GM12878 (cell line): ENCODE measurements at regions of chr11 and their contacts with region 1.

Region 1: DNA sequence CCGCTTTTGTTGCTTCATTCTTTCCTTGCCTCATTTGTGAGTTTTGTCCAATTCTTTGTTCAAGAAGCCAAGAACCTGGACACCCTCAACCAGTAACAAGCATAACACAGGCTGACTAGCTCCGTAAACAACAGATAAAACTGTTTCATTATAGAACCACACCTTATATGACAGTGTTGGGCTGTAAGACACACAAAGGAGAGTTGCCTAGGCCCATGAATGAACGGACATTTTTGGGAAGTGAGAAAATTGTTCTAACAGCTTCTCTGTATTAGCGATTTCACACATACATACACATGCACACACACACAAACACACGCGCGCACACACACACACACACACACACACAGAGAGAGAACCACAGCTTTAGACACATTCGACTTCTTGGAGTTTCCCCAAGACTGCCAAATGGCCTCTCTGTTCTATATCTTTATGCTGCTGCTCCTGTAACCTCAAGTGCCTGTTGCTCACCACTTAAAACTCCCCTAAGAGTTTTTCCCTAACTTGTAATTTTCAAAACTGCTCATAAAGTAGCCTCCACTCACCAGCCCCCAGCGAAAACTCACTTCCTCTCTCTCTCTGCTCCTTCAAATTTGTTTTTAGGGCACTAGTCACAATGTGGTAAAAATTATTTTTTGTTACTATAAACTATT is 35.9 kb downstream of the CTSC start:
- DNase-seq: peak; percentile 85
- ATAC-seq: peak; percentile 80
- H3K4me3 ChIP-seq: peak overlapping the region; percentile 43
- H3K27ac ChIP-seq: peak overlapping the region; percentile 83
- H3K4me1 ChIP-seq: peaks cover 48% of the 10 kb centered on the region
- H3K27me3 ChIP-seq: no peaks in the 10 kb centered on the region
- CTCF ChIP-seq: no peak
- EP300 ChIP-seq: peak; percentile 86 to 95; a peak in 3 of 4 replicates
- POLR2A ChIP-seq: no peak
- RAD21 ChIP-seq: no peak

Region 2: GRCh38 chr11:88131764-88132470 is 169.7 kb before region 1 on chr11:
- CTCF ChIA-PET with region 1: no interaction called
- POLR2A ChIA-PET with region 1: no interaction called
- RAD21 ChIA-PET with region 1: no interaction called
- SMC1A ChIA-PET with region 1: no interaction called
- in situ Hi-C with region 1: no loop called
- intact Hi-C with region 1: no loop called
- DNase-seq: no peak
- ATAC-seq: peak; percentile 90
- H3K4me3 ChIP-seq: no peak overlapping the region
- H3K27ac ChIP-seq: no peak overlapping the region
- H3K4me1 ChIP-seq: no peaks in the 10 kb centered on the region
- H3K27me3 ChIP-seq: no peaks in the 10 kb centered on the region
- CTCF ChIP-seq: no peak
- EP300 ChIP-seq: no peak
- POLR2A ChIP-seq: no peak
- RAD21 ChIP-seq: no peak

Region 3: DNA sequence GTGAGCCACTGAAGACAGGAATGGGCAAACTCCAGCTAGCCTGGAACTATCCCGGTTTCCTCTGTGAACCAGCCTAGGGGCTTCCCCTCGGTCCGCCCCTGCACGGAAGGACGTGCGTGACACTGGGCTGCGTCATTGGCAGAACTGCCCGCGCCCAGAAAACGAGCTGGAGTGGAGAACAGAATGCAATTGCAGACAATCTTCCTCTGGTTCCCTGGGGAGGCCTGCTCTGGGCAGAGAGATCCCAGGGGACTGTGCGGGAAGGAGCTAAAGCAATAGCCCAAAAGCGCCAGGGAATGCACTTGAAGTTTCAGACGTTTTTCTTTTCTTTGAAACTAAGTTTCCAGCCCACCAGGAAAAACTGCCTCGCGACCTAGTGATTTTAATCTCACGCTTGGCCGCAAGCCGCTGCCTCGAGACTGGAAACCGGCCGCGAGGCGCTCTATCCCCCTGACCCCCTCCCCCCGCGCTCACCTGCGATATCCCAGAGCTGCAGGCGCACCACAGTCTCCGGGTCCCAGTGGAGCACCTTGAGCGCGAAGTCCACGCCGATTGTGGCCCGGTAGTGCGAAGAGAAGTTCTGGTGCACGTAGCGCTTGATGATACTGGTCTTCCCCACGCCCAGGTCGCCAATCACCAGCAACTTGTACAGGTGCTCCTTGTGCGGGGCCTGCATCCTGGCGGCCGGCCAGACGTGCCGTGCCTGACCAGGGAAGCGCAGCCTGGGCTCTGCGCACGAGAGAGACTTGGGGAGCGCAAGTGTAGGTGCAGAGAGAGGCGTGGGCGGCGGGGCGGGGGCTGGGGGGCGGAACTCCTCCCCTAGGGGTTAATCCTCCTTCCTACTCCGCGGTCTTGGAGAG is 126.7 kb before region 1 on chr11 and contains the start of gene RAB38:
- CTCF ChIA-PET with region 1: interaction called, 3 read pairs
- POLR2A ChIA-PET with region 1: no interaction called
- RAD21 ChIA-PET with region 1: interaction called, 3 read pairs
- SMC1A ChIA-PET with region 1: interaction called, 3 read pairs
- in situ Hi-C with region 1: no loop called
- intact Hi-C with region 1: loop called (anchors 5 kb)
- DNase-seq: no peak
- ATAC-seq: peak; percentile 71
- H3K4me3 ChIP-seq: peak within 1 kb of the TSS; percentile 72
- H3K27ac ChIP-seq: no peak within 1 kb of the TSS
- H3K4me1 ChIP-seq: peaks cover 23% of the 10 kb centered on the region
- H3K27me3 ChIP-seq: no peaks in the 10 kb centered on the region
- CTCF ChIP-seq: no peak
- EP300 ChIP-seq: peak in 1 of 2 experiments; percentile 5; a peak in 1 of 4 replicates
- POLR2A ChIP-seq: peak; percentile 46; the same call in 1 of the 2 replicates
- RAD21 ChIP-seq: no peak
- polyA plus RNA-seq, gene RAB38: 12.3 to 19.0 TPM

Region 4: GRCh38 chr11:88320149-88320559 is 18.5 kb after region 1 on chr11:
- CTCF ChIA-PET with region 1: interaction called, 4 read pairs
- POLR2A ChIA-PET with region 1: interaction called, 11 read pairs
- RAD21 ChIA-PET with region 1: interaction called, 80 read pairs
- SMC1A ChIA-PET with region 1: interaction called, 288 read pairs
- in situ Hi-C with region 1: no loop called
- intact Hi-C with region 1: no loop called
- DNase-seq: no peak
- ATAC-seq: peak; percentile 37; the same call in 2 of the 3 replicates
- H3K4me3 ChIP-seq: no peak overlapping the region
- H3K27ac ChIP-seq: no peak overlapping the region
- H3K4me1 ChIP-seq: no peaks in the 10 kb centered on the region
- H3K27me3 ChIP-seq: no peaks in the 10 kb centered on the region
- CTCF ChIP-seq: no peak
- EP300 ChIP-seq: no peak
- POLR2A ChIP-seq: no peak
- RAD21 ChIP-seq: no peak

Region 5: GRCh38 chr11:88337181-88337986 is 35.8 kb after region 1 on chr11 and contains the start of gene CTSC:
- CTCF ChIA-PET with region 1: interaction called, 13 read pairs
- POLR2A ChIA-PET with region 1: interaction called, 10 read pairs
- RAD21 ChIA-PET with region 1: interaction called, 32 read pairs
- SMC1A ChIA-PET with region 1: interaction called, 101 read pairs
- in situ Hi-C with region 1: no loop called
- intact Hi-C with region 1: loop called (anchors 2 kb)
- DNase-seq: no peak
- ATAC-seq: peak; percentile 82
- H3K4me3 ChIP-seq: peak within 1 kb of the TSS; percentile 99
- H3K27ac ChIP-seq: peak within 1 kb of the TSS; percentile 84
- H3K4me1 ChIP-seq: no peaks in the 10 kb centered on the region; the same call in 1 of the 2 replicates
- H3K27me3 ChIP-seq: no peaks in the 10 kb centered on the region
- CTCF ChIP-seq: no peak
- EP300 ChIP-seq: peak in 1 of 2 experiments; percentile 48; a peak in 1 of 4 replicates
- POLR2A ChIP-seq: peak; percentile 100
- RAD21 ChIP-seq: peak; percentile 20; the same call in 1 of the 2 replicates
- polyA plus RNA-seq, gene CTSC: 709 to 1,123 TPM

Region 6: DNA sequence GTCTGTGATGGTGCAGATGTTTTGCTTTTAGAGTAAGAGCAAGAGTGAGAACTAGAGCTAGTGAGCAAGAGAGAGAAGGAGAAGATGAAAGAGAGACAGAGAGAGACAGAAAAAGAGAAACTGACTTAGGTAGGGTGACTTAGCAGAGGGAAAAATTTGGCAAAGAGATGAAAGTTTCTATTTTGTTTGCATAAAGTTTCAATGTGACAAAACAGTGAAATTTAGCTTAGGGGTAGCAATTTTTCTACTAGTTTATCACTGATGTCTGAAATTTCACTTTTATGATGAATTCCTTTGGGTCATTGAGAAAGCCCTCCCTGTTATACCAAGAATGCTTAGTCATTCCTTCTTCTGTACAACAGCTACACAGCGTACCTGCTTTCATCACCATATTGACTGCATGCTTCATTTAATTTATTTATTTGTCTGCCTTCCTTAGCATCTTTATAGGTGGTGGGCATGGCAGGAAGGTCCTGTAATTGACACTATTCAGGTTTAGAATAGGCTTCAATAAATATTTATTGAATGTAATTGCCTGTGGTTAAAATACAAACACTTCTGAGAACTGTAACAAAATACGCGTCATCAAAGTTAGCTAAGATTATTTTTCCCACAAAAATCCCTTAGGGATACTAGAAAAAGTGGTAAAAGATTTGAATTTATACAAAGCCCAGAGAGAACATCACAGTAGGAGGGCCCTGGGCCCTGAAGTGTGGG is 55.9 kb after region 1 on chr11:
- CTCF ChIA-PET with region 1: interaction called, 10 read pairs
- POLR2A ChIA-PET with region 1: interaction called, 28 read pairs
- RAD21 ChIA-PET with region 1: interaction called, 143 read pairs
- SMC1A ChIA-PET with region 1: interaction called, 140 read pairs
- in situ Hi-C with region 1: loop called (anchors 5 kb)
- intact Hi-C with region 1: loop called (anchors 1 kb)
- DNase-seq: peak; percentile 79
- ATAC-seq: peak; percentile 62
- H3K4me3 ChIP-seq: peak overlapping the region; percentile 23; the same call in 1 of the 2 replicates
- H3K27ac ChIP-seq: peak overlapping the region; percentile 89
- H3K4me1 ChIP-seq: peaks cover 53% of the 10 kb centered on the region
- H3K27me3 ChIP-seq: no peaks in the 10 kb centered on the region
- CTCF ChIP-seq: no peak
- EP300 ChIP-seq: peak; percentile 63 to 78
- POLR2A ChIP-seq: no peak
- RAD21 ChIP-seq: no peak

Region 7: DNA sequence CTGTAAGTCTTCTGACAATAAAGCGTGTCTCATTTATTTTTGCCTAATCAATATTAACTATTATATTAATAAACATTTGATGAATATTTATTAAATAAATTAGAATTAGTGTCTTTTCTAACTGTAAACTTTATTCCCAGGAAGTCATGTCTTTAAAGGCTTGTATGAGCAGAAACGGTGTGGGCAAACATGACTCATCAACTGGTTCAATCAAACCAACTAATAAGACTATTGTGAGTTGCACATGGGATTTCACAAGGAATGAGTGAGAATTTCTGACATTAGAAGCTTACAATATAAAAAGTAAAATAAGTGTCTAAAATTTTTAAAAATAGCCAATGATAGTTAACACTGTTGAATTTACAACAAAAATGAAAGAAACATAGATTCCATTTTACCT is 295.2 kb after region 1 on chr11:
- CTCF ChIA-PET with region 1: no interaction called
- POLR2A ChIA-PET with region 1: no interaction called
- RAD21 ChIA-PET with region 1: no interaction called
- SMC1A ChIA-PET with region 1: no interaction called
- in situ Hi-C with region 1: no loop called
- intact Hi-C with region 1: no loop called
- DNase-seq: no peak
- ATAC-seq: no peak
- H3K4me3 ChIP-seq: no peak overlapping the region
- H3K27ac ChIP-seq: no peak overlapping the region
- H3K4me1 ChIP-seq: no peaks in the 10 kb centered on the region
- H3K27me3 ChIP-seq: no peaks in the 10 kb centered on the region
- CTCF ChIP-seq: no peak
- EP300 ChIP-seq: no peak
- POLR2A ChIP-seq: no peak
- RAD21 ChIP-seq: no peak

Region 8: GRCh38 chr11:88651556-88651955 is 349.9 kb after region 1 on chr11:
- CTCF ChIA-PET with region 1: no interaction called
- POLR2A ChIA-PET with region 1: no interaction called
- RAD21 ChIA-PET with region 1: no interaction called
- SMC1A ChIA-PET with region 1: no interaction called
- in situ Hi-C with region 1: no loop called
- intact Hi-C with region 1: no loop called
- DNase-seq: no peak
- ATAC-seq: no peak
- H3K4me3 ChIP-seq: no peak overlapping the region
- H3K27ac ChIP-seq: no peak overlapping the region
- H3K4me1 ChIP-seq: no peaks in the 10 kb centered on the region
- H3K27me3 ChIP-seq: no peaks in the 10 kb centered on the region
- CTCF ChIP-seq: no peak
- EP300 ChIP-seq: no peak
- POLR2A ChIP-seq: no peak
- RAD21 ChIP-seq: no peak

Region 9: DNA sequence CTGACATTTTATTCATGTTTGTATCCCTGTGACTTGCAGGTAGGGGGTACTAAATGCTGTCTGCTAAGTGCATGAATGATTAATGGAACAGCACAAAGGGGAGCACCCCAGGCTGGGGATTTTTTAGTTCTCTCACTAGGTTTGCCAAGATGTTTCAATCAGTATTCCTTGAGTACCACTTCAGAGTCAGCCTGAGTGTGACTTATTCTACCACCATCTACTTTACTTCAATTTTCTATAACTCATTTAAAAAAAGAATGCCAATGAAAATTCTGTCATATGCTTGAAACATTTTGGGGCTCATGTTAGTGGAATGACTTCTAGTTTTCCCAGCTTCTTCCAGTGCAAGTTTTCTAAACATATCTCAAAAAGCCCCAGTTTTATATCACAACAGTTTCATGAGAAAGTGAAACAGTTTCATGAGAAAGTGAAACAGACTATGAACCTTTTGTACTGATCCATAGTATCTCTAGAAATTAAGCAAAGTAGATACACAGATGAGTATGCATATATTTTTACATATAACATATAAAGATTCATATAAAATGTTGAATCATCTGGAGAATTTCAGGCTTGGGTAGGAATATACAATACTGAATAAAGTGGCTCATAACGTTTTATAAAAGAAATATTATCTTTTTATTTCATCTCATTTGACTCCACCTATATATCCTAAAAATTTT is 511.8 kb after region 1 on chr11:
- CTCF ChIA-PET with region 1: no interaction called
- POLR2A ChIA-PET with region 1: no interaction called
- RAD21 ChIA-PET with region 1: no interaction called
- SMC1A ChIA-PET with region 1: interaction called, 3 read pairs
- in situ Hi-C with region 1: no loop called
- intact Hi-C with region 1: loop called (anchors 10 kb)
- DNase-seq: no peak
- ATAC-seq: peak; percentile 92
- H3K4me3 ChIP-seq: peak overlapping the region; percentile 14; the same call in 1 of the 2 replicates
- H3K27ac ChIP-seq: peak overlapping the region; percentile 24; the same call in 1 of the 2 replicates
- H3K4me1 ChIP-seq: peaks cover 10% of the 10 kb centered on the region; the same call in 1 of the 2 replicates
- H3K27me3 ChIP-seq: no peaks in the 10 kb centered on the region
- CTCF ChIP-seq: no peak; a peak in 1 of 6 replicates
- EP300 ChIP-seq: no peak
- POLR2A ChIP-seq: no peak
- RAD21 ChIP-seq: no peak